Common myeloid progenitor, CD34-positive (primary cell): ENCODE measurements at regions of chr17 and their contacts with region 1.

Region 1: DNA sequence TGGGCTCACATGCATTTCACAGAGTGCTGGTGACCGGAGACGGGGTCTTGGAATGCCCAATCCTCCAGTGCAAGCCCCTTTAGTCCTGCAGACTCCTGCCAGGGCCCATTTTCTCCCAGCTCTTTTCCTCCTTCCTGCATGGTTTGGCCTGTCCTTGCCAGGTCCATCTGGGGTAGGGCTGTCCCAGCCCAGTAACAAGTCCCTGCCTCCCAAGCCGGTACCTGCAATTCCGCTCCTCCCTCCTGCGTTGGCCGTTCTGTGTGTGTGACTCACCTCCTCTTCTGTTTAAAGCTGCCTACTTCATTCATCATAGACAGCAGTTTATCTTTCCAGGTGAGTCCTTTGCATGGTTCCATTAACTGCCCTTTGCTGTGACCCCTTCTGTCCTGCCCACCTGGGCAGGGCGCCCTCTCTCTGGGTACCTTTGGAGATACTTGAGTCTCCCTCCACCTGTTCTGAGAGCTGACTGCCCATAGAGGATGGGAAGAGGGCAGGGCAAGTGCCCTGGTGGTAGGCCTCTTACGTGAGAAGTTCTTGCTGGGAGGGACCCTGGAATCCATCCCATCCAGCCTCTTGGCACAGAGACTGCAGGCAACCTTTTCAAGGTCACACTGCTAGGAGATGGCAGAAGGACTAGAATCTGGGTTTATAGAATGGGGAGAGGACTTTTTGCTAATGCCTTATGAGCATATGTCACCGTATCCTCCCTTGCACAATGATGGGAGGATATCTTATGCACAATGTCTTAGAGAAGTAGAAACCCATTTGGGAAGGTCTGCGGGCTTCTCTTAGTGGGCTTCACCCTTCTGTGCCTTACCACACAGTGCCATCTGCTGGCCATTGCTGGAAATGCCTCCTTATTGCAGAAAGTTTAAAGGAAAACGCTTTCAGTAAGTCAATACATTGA is 29.7 kb upstream of the LGALS9 start:
- DNase-seq: peak; percentile 82 to 92 (median 85)
- H3K4me3 ChIP-seq: no peak overlapping the region
- H3K27ac ChIP-seq: no peak overlapping the region
- H3K4me1 ChIP-seq: peaks cover 0 to 23% (median 21%) of the 10 kb centered on the region in 4 experiments
- H3K27me3 ChIP-seq: no peaks in the 10 kb centered on the region

Region 2: GRCh38 chr17:27245230-27245696 is 356.1 kb before region 1 on chr17:
- CTCF ChIA-PET with region 1: interaction called, 162 read pairs
- POLR2A ChIA-PET with region 1: no interaction called
- DNase-seq: peak; percentile 72 to 81 (median 76)
- H3K4me3 ChIP-seq: peak overlapping the region in 3 of 7 experiments; percentile 24 to 59 (median 41)
- H3K27ac ChIP-seq: peak overlapping the region in 1 of 2 experiments; percentile 56
- H3K4me1 ChIP-seq: peaks cover 2 to 39% (median 17%) of the 10 kb centered on the region in 4 experiments
- H3K27me3 ChIP-seq: no peaks in the 10 kb centered on the region

Region 3: DNA sequence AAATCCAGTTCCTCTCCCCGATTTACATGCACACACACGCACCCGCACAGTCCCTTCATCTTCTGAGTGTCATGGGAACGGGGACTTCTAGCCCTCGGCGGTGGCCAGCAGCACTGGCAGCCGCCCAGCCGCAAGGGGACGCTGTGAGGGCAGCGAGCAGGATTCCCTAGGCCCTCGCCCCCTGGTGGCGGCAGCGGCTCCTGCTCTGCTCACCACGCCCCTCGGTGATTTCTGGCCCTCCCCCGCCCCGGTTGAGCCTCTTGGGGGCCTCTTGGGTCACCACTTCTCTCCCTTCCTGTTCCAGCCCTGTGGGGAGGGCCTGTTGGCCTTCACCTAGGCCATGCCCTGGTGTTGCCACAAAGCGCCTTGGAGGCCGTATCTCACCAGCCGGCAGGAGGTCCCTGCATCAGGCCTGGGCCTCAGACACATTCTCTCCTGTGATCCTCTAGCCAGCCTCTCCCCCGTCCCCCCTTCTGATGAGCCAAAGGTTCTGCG is 220.3 kb before region 1 on chr17:
- CTCF ChIA-PET with region 1: interaction called, 92 read pairs
- POLR2A ChIA-PET with region 1: no interaction called
- DNase-seq: peak; percentile 87 to 92 (median 90)
- H3K4me3 ChIP-seq: peak overlapping the region in 2 of 7 experiments; percentile 44 to 66
- H3K27ac ChIP-seq: no peak overlapping the region
- H3K4me1 ChIP-seq: peaks cover 0 to 30% (median 21%) of the 10 kb centered on the region in 4 experiments
- H3K27me3 ChIP-seq: no peaks in the 10 kb centered on the region

Region 4: DNA sequence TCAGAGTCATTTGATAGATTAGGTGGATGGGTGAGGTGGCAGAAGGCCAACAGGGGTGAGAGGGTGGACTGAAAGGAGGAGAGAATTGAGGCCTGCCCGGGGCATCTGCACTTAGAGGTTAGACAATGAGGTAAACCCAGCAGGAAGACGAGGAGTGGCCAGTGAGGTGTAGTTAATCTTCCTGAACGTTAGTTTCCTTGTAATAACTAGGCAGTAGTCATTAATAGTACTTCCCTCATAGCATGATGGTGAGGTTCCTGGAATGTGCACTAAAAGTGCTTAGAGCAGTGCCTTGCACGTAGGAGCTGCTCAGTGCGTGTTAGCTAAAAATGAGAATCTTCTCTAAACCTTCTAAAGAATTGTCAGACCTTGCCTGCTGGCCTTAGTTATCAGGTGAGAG is 158.6 kb before region 1 on chr17:
- CTCF ChIA-PET with region 1: interaction called, 10 read pairs
- POLR2A ChIA-PET with region 1: no interaction called
- DNase-seq: no peak
- H3K4me3 ChIP-seq: no peak overlapping the region
- H3K27ac ChIP-seq: no peak overlapping the region
- H3K4me1 ChIP-seq: peaks cover 0 to 3% (median 0%) of the 10 kb centered on the region in 4 experiments
- H3K27me3 ChIP-seq: no peaks in the 10 kb centered on the region

Region 5: DNA sequence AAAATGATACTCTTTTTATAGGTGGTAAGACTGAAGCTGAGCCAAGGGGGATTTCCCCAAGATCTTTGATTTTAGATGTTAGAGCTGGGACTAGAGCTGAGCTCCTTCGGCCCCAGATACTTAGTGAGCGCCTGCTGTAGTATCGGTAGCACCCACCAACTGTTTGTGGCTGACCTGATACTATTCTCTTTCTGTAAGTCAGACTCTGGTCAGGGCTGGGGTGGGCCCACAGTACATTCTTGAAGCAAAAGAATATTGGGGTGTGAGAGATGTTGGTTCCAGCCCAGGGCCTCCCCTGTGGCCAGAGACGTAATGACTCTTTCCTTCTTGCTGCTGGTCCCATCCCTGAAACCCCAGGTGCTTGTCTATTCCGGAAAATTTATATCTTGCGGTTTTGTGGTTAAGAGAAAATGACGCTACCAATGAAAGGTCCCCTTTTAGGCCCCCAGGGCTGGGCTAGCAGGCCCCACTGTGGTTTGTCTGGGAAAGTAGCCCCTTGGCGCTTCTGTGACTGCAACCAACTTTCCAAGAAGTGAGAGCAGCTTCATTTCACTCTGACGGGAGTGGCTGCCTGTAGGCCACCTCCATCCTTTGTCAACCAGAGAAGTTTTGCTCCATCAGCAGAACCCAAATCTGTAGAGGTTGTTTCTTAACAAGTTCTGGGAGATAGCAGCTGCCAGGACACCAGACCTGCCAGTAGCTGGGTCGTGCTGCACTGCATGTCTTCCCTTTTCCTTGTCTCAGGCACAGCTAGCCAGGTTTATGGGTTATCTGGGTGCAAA is 56.8 kb before region 1 on chr17:
- CTCF ChIA-PET with region 1: interaction called, 24 read pairs
- POLR2A ChIA-PET with region 1: no interaction called
- DNase-seq: peak; percentile 92 to 96 (median 96)
- H3K4me3 ChIP-seq: peak overlapping the region in 3 of 7 experiments; percentile 7 to 51 (median 17)
- H3K27ac ChIP-seq: no peak overlapping the region
- H3K4me1 ChIP-seq: peaks cover 25 to 66% (median 51%) of the 10 kb centered on the region in 4 experiments
- H3K27me3 ChIP-seq: peaks cover 0 to 5% (median 0%) of the 10 kb centered on the region in 5 experiments

Region 6: DNA sequence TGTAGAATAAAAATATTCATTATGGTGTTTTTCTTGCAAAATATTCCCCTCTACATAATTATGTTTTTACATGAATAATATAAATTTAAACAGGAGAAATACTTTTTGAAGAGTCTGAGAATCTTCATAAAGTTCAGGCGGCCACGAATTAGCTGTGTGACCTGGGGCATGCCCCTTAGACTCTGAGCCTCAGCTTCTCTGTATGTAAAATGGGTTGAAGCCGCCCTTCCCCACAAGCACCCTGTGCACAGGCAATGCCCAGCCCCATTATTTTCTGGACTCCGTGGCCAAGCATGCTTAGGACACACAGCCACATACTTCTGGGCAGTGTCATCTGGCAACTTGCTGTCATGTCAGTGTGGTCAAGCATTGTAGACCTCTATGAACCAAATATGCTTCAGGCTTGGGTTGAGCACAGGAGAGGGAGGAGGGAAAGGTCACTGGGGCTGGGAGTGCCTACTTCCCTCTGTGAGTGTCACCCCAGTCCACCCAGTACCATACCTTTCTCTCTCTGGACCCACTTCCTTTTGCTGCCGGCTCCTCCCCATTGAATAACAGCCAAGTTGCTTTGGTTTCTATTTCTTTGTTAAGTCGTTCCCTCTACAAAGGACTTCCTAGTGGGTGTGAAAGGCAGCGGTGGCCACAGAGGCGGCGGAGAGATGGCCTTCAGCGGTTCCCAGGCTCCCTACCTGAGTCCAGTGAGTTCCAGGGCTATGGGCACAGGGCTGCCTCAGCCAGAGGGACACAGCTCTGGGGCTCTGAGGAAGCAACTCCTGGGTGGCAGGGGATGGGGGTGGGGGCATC is 29.5 kb after region 1 on chr17 and contains the start of gene LGALS9:
- CTCF ChIA-PET with region 1: interaction called, 39 read pairs
- POLR2A ChIA-PET with region 1: no interaction called
- DNase-seq: peak; percentile 29 to 81 (median 68)
- H3K4me3 ChIP-seq: peak within 1 kb of the TSS; percentile 23 to 83 (median 77)
- H3K27ac ChIP-seq: peak within 1 kb of the TSS; percentile 50 to 79
- H3K4me1 ChIP-seq: peaks cover 7 to 57% (median 45%) of the 10 kb centered on the region in 4 experiments
- H3K27me3 ChIP-seq: no peaks in the 10 kb centered on the region

Region 7: GRCh38 chr17:27670791-27671590 is 69.7 kb after region 1 on chr17:
- CTCF ChIA-PET with region 1: no interaction called
- POLR2A ChIA-PET with region 1: no interaction called
- DNase-seq: no peak
- H3K4me3 ChIP-seq: no peak overlapping the region
- H3K27ac ChIP-seq: no peak overlapping the region
- H3K4me1 ChIP-seq: no peaks in the 10 kb centered on the region
- H3K27me3 ChIP-seq: peaks cover 0 to 3% (median 0%) of the 10 kb centered on the region in 5 experiments

Region 8: DNA sequence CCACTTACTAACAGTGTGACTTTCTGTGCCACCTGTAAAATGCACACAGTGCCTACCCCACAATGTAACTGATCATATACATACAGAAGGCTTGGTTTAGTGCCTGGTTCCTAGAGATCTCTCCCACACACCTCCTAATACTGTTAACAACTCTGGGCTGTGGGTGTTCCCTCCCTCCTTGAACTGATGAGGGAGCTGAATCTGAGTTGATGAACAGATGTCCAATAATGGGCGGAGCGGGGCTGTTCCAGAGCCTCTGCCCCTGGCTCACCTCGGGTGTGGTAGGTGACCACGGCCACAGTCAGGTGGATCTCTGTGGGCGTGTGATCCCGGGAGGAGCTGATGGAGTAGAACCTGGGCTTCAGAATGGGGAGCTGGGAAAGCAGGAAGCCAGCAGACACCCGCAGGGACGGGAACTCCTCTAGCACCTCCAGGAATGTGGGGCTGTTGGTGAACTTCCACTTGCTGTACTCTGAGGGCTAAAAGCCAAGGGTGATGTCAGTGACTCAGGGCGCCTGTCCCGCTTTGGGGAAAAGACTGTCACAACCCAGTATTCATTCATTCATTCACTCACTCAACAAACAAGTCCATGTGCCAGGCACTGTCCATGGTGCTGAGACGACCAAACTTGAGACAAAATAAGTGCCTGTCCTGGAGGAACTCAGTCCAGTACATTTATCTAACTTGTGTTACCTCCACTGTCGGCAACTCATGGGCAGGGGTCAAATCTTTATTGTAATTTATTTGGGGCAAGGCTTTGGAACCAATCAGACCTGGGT is 161.4 kb after region 1 on chr17:
- CTCF ChIA-PET with region 1: no interaction called
- POLR2A ChIA-PET with region 1: no interaction called
- DNase-seq: peak; percentile 23 to 69 (median 65)
- H3K4me3 ChIP-seq: no peak overlapping the region
- H3K27ac ChIP-seq: no peak overlapping the region
- H3K4me1 ChIP-seq: no peaks in the 10 kb centered on the region
- H3K27me3 ChIP-seq: peaks cover 0 to 1% (median 0%) of the 10 kb centered on the region in 5 experiments